Sciatic nerve (tissue), 2 donors: ENCODE measurements at regions of chr1 and their contacts with region 1.

Region 1: GRCh38 chr1:35726450-35727433 is 8.1 kb upstream of the C1orf216 start:
- DNase-seq: peak; percentile 68
- ATAC-seq: peak; percentile 92

Region 2: DNA sequence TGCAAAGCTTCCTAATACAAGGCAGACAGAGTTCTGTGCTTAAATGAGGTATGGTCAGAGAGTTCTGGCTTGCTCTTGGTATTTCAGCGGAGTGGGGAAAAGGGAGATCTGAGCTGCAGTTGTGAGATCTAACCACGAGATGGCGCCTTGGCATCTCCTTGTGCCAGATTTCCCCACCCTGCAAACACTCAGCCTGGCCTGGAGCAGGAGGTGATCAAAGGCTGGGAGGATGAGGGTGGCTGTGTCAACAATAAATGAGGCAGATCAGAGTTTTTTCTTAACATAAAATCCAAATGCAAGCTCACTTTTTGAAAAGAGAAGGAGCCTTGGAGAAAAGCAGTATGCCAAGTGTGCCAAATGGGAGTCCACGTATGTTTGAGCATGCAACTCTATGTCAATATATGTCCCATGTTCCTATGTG is 157.8 kb before region 1 on chr1:
- intact Hi-C with region 1: loop called (anchors 5 kb)
- DNase-seq: peak; percentile 79
- ATAC-seq: peak; percentile 70

Region 3: DNA sequence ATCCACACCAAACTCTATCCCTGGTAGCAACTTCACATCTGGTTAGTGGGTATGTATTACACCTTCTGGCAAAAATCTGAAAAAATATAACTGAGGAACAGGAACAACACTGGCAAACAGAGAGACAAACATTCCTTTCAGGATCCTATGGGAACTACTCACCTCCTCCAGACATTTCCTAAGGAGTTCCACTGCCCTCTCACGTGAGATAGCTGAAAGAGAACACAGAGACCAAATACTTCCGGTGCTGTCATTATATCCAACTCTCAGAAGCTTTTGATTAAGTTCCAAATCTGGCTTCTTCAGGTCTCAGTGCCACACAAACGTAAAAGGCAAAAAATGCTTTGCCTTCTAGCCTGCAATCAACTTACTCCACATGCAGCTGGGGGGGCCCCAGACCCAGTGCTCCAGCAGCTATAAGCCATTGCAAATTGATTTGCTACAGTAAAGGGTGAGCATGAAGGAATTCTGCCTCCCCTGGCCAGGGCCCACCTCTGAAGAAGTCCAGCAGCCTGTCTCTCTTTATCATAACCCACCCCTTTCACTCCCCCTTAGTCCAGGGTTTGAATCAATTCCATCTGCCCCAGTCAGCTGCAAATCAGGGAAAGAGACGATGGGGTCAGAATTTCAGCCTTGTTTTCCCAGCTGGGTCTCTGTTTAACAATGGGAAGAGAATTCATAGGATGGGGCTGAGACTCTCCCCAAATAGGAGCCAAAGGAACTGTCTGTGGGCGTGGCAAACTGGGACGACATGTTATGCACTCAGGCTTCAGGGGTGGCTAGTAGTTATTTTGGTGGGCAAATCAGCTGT is 121.5 kb before region 1 on chr1:
- intact Hi-C with region 1: no loop called
- DNase-seq: no peak
- ATAC-seq: no peak

Region 4: DNA sequence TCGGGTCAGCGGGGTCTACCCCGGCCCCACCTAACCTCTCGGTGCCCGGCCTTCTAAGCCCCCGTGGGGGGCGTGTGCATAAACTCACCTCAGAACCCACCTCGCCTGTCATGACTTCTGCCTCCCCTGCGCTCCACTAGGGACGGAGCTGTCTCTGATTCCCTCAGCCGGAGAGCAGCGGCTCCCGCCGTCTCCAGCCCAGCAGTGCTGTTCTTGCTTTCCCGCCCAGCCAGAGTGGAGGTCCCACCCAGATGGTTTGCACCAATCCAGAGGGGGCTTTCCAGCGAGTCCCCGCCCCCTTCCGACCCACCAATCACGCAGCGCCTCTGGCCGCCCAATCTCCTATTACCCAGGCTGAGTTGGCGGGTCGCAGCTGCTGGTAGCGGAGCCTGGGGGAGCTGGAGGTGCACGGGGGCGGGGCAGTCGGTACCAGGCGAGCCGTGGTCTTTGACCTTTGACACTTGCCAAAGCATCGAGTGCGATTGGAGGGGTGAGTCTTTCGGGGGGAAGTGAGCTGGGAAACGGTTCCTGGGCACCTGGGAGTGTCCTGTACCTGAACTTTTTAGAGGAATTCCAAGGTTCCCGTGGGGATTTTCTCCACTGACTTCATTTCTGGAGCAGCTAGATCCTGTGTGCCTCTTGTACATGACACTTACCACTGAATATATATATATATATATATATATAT is 43.2 kb after region 1 on chr1 and contains the start of gene CLSPN:
- intact Hi-C with region 1: no loop called
- DNase-seq: peak; percentile 95
- ATAC-seq: peak; percentile 99
- total RNA-seq, gene CLSPN: 0.40 TPM

Region 5: GRCh38 chr1:35810096-35810881 is 83.5 kb after region 1 on chr1:
- intact Hi-C with region 1: no loop called
- DNase-seq: no peak
- ATAC-seq: no peak